Astrocyte of the cerebellum (primary cell): ENCODE measurements at regions of chr2 and their contacts with region 1.

Region 1: DNA sequence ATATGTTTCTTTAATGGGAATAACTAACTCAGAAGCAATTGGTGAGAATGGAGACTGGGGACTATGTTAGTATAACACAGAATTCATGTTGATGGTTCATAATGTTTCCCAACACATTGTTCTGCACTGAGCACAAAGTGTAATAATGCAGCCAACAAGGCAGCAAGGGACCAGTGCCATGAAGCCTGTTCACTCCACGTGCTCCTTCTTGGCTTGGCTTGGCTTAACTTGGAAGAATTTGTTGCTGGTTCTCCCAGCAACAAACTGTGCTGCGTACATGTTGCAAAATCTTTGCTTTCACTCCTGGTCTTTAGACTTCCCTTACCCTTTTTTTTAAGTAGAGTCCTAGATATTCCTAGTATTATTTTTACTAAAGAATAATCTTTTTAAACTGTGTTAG is 129.7 kb downstream of the MAP3K20 start:
- DNase-seq: peak; percentile 37
- H3K4me3 ChIP-seq: no peak overlapping the region
- CTCF ChIP-seq: no peak

Region 2: GRCh38 chr2:172066394-172066886 is 1138.9 kb before region 1 on chr2:
- in situ Hi-C with region 1: no loop called
- DNase-seq: no peak
- H3K4me3 ChIP-seq: no peak overlapping the region
- CTCF ChIP-seq: no peak

Region 3: DNA sequence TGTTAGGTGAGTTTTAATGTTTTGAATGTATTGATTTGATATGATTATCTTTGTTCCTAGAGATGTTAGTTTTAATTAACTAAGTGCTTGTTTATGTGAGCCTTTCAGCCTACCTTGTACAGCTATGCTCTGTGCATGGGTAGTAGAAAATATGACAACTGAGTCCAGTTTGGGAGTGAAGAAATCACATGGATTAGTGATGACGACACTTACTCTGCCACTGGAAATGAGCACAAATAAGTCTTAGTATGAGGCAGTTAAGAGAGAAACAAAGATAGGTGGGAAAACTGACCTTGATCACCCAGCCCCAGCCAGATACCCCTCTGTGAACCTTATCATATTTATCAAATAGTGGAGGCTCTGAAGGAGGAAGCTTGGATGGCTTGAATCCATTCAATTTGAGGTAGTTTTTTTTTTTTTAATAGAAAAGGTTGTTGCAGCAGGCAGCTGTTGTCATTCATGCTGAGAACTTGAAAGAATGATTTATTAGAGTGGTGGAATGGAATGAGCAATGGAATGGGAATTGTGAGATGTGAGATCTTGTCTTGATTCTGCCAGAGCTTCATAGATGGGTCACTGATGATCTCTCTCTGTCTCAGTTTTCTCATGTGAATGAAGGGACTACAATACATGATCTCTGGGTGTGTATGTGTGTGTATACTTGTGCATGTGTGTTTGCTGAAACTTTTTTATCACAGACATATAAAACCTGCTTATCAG is 33.3 kb before region 1 on chr2:
- in situ Hi-C with region 1: loop called (anchors 5 kb)
- DNase-seq: no peak
- H3K4me3 ChIP-seq: no peak overlapping the region
- CTCF ChIP-seq: no peak